HEK293 (cell line): ENCODE measurements at regions of chr5 and their contacts with region 1.

Region 1: DNA sequence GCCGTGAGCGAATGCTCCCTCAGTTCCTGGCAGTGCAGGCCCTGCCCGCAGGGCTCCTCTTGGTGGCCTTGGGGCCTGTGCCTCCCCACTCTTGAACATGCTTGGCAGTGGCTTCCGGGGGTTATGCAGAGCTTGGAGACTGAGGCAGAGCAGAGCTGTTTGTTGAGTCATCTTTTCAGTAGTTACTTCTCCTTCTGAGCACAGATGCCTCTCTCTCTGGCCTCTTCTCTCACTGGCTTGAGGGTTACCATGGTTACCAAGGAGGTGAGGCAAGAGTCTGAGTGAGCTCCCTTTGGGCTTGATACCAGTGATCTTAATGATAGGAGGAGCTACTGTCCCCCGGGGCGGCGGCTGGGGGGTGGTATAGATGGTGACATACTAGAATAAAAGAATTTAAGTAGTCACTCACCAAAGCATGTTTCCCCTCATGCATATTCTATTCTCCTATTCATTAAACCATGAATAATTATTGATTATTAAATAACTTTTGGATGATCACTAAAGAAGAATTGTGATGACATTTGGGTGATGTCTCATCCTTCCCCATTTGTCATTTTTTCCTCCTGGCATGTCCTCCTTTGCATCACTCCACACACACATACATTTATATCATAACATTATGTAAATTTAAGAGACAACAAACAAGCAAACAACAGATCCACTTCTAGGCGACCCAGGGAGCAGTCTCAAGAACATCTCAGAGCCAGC is 111.1 kb downstream of the ARHGAP26 start:
- H3K4me3 ChIP-seq: no peak overlapping the region
- H3K27ac ChIP-seq: no peak overlapping the region
- H3K4me1 ChIP-seq: no peaks in the 10 kb centered on the region
- CTCF ChIP-seq: no peak

Region 2: DNA sequence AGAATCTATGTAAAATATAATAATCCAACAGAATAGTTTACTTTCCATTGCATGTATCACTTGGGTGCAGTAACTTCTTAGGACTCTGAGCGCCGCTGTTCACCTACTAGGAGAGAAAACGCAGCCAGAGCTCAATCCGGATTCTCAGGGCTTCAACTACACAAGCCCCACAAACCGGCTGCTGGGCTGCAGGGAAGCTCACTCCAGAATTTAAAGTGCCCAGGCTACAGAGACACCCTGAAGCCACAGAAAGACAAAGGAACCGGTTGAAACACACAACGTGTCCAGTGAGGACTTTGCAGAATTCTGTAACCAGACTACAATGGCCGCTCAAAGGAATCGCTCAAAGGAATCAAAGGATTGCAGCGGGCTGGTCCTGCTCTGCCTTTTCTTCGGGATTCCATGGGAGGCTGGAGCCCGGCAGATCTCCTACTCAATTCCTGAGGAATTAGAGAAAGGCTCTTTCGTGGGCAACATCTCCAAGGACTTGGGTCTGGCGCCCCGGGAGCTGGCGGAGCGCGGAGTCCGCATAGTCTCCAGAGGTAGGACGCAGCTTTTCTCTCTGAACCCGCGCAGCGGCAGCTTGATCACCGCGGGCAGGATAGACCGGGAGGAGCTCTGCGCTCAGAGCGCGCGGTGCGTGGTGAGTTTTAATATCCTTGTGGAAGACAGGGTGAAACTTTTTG is 1468.2 kb before region 1 on chr5 and contains the start of gene PCDHGA10:
- CTCF ChIA-PET with region 1: no interaction called
- POLR2A ChIA-PET with region 1: no interaction called
- H3K4me3 ChIP-seq: no peak within 1 kb of the TSS
- H3K27ac ChIP-seq: no peak within 1 kb of the TSS
- H3K4me1 ChIP-seq: no peaks in the 10 kb centered on the region
- CTCF ChIP-seq: no peak

Region 3: GRCh38 chr5:142769741-142770631 is 111.2 kb before region 1 on chr5 and contains the start of gene ARHGAP26:
- CTCF ChIA-PET with region 1: interaction called, 16 read pairs
- POLR2A ChIA-PET with region 1: interaction called, 4 read pairs
- H3K4me3 ChIP-seq: peak within 1 kb of the TSS; percentile 93
- H3K27ac ChIP-seq: peak within 1 kb of the TSS; percentile 86
- H3K4me1 ChIP-seq: 0 out of 2 replicates have a peak, but pooled peaks cover 4% of the 10 kb centered on the region
- CTCF ChIP-seq: peak; percentile 71

Region 4: DNA sequence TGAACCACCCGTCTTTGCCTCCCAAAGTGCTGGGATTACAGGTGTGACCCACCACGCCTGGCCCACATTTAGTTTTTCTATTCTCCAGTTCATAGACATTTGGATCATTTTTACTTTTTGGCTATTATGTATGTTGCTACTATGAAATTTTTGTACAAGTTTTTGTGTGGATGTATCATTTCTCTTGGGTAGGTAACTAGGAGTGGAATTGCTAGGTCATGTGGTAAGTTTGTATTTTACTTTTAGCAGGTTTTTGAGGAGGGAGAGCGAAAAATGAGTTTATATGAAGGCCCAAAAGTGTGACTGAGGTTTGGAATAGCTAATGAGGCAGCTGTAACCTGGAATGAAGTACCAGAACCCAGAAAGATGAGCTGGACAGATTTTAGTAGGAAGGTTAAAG is 75.9 kb before region 1 on chr5:
- CTCF ChIA-PET with region 1: no interaction called
- POLR2A ChIA-PET with region 1: no interaction called
- H3K4me3 ChIP-seq: no peak overlapping the region
- H3K27ac ChIP-seq: no peak overlapping the region
- H3K4me1 ChIP-seq: peaks cover 32% of the 10 kb centered on the region
- CTCF ChIP-seq: no peak

Region 5: DNA sequence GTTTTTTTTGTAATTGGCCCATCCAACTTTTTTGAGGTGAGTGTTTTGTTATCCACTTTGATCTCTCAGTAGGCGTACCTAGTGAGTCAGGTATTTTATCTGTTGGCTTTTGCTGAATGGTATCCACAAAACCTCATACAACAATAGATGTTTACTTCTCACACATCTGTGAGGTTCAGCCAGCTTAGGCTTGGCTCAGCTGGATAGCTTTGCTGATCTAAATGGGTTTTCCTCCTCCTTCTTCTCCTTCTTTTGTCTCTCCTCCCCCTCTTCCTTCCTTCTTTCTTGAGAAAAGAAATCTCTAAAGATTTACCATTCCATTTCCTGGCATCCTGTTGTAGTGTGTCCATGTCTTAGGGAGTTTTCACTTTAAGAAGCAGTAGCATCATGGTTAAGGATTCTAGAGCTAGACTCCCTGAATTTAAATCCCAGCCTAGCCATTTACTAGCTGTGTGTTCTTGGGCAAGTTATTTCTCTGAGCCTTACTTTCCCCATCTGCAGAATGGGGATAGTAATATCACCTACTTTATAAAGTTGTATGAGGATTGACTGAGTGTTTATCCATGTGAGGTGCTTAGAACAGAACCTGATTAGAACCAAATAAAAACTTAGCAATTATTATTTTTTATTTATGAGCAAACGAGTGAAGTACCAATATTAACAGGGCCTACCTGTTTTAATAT is 15.2 kb after region 1 on chr5:
- CTCF ChIA-PET with region 1: interaction called, 10 read pairs
- POLR2A ChIA-PET with region 1: no interaction called
- H3K4me3 ChIP-seq: no peak overlapping the region
- H3K27ac ChIP-seq: no peak overlapping the region
- H3K4me1 ChIP-seq: 0 out of 2 replicates have a peak, but pooled peaks cover 4% of the 10 kb centered on the region
- CTCF ChIP-seq: no peak

Region 6: GRCh38 chr5:142906863-142907671 is 25.8 kb after region 1 on chr5:
- CTCF ChIA-PET with region 1: interaction called, 11 read pairs
- POLR2A ChIA-PET with region 1: no interaction called
- H3K4me3 ChIP-seq: no peak overlapping the region
- H3K27ac ChIP-seq: no peak overlapping the region
- H3K4me1 ChIP-seq: no peaks in the 10 kb centered on the region
- CTCF ChIP-seq: no peak

Region 7: DNA sequence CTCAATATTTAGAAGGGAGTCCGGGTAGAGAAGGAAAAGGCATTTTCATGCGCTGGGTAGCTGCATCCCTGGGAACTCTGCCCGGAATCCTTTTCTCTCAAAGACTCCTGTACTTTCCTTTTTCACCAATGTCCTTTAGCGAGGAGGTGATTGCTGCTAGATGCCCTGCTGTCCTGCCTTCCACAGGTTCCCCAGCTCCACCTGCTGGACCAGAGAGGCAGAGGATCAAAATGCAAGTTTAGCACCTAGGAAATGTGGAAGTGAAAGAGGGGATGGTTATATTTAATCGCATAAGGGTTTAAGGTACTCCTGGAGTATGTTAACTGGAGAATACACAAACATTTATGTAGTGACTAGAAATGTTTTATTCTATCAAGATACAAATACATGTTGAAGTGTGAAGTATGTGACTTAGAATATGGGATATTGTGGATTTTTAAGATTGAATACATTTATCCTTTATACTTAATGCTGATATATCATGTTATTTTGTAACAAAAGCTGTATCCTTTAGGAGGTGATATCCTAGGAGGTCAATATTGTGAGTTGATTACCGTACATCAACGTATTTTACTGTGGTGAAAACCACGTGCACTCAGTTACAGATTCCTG is 34.7 kb after region 1 on chr5:
- CTCF ChIA-PET with region 1: interaction called, 20 read pairs
- POLR2A ChIA-PET with region 1: no interaction called
- H3K4me3 ChIP-seq: no peak overlapping the region
- H3K27ac ChIP-seq: no peak overlapping the region
- H3K4me1 ChIP-seq: no peaks in the 10 kb centered on the region
- CTCF ChIP-seq: peak; percentile 57; the same call in 1 of the 2 replicates